ENCODE measurements at regions of chr20 and their contacts with region 1.

Region 1: DNA sequence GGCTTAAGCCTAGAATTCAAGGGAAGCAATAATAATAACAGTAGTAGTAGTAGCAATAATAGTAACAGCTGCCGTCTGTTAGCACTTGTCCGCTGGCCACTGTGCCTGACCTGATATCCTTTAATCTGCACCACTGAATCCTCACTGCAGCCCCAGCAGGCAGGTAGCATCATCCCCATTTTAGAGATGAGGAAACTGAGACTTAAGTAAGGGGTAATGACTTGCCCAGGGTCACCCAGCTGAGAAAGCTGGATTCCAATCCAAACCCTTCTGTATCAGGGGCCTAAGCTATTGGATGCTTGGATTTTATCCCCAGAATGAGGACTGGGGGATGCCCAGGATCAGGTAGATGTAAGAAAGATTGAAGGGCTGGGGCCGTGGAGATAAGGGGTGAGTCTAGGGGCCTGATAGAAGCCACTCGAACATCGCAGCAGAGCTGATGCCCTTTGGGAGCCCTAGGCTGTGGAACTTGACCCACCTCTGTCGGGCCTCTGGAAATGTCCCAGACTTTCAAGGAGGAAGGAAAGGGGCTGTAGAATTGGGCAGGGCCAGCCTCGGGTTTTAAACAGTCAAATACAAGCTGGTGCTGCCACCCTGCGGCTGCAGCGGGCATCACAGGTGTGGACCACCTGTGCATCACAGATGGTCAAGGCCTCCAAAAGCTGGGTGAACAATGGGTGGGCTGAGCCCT is 102.1 kb upstream of the MYL9 start:
- DNase-seq: peak; percentile 76
- H3K4me3 Mint-ChIP-seq: no peak overlapping the region
- H3K27ac Mint-ChIP-seq: no peak overlapping the region
- H3K4me1 Mint-ChIP-seq: peaks cover 2% of the 10 kb centered on the region
- H3K27me3 Mint-ChIP-seq: no peaks in the 10 kb centered on the region

Region 2: DNA sequence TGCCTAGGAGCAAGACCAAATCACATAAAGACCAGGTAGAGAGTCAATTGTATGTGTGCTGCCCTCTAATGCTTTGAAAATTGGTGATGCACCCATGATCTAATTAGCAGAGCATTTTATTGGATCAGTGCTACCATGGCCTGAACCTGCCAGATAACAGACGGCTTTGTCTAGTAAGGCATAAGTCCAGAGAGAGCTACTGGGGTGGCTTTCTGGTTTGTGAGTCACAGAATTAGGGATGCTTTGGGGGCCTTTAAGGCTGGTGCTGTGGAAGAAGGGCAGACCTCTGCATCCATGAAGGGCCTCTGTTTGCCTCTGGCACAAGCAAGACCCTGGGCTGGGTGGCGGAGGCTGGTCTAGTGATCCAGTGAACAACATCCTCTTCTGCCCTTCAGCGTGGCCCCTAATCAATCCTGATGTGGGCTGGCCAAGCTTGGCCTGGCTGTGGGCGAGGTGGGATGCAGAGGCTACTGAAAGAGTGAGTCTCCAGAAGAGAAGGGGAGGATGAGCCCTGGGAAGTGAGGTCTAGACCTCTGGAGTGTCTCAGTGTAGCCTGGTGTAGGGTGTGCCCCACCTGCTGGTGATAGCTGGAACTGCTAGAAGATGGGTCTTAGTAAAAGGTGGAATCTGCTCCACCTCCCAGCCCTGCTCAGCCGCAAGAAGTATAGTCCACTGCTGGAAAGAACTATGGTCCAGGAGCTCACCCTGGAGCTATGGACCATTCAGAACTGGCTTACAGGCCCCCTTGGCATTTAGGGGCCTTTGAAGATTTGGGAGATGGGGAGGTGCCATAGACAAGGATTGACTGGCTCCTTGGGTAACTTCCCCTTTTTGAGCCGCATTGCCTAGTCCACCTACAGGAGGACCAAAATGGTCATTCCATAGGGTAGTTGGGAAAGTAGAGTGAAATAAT is 239.6 kb before region 1 on chr20:
- CTCF ChIA-PET with region 1: interaction called, 79 read pairs
- intact Hi-C with region 1: loop called (anchors 1 kb)
- DNase-seq: peak; percentile 89
- H3K4me3 Mint-ChIP-seq: no peak overlapping the region
- H3K27ac Mint-ChIP-seq: no peak overlapping the region
- H3K4me1 Mint-ChIP-seq: peaks cover 4% of the 10 kb centered on the region
- H3K27me3 Mint-ChIP-seq: no peaks in the 10 kb centered on the region

Region 3: GRCh38 chr20:36273414-36274180 is 165.6 kb before region 1 on chr20:
- CTCF ChIA-PET with region 1: interaction called, 17 read pairs
- intact Hi-C with region 1: loop called (anchors 1 kb)
- DNase-seq: peak; percentile 34
- H3K4me3 Mint-ChIP-seq: no peak overlapping the region
- H3K27ac Mint-ChIP-seq: no peak overlapping the region
- H3K4me1 Mint-ChIP-seq: no peaks in the 10 kb centered on the region
- H3K27me3 Mint-ChIP-seq: no peaks in the 10 kb centered on the region

Region 4: GRCh38 chr20:36408219-36408618 is 31.0 kb before region 1 on chr20:
- CTCF ChIA-PET with region 1: no interaction called
- intact Hi-C with region 1: no loop called
- DNase-seq: no peak
- H3K4me3 Mint-ChIP-seq: no peak overlapping the region
- H3K27ac Mint-ChIP-seq: no peak overlapping the region
- H3K4me1 Mint-ChIP-seq: no peaks in the 10 kb centered on the region
- H3K27me3 Mint-ChIP-seq: peaks cover 6% of the 10 kb centered on the region

Region 5: DNA sequence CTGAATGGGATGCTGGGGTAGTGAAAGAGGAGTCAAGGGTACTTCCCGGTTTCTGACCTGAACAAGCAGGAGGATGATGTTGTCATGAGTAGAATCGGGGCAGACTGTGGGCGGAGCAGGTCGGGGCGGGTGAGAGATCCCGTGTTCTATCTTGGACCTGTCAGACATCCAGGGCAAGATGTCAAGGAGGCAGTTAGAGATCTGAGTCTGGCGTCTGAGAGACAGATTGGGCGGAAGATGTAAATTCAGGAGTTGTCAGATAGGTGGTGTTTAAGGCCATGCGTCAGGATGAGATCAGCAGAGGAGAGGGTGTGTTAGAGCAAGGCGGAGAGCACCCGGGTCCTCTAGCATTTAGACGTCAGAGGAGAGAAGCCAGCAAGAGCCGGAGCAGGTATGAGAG is 17.5 kb before region 1 on chr20:
- CTCF ChIA-PET with region 1: interaction called, 17 read pairs
- intact Hi-C with region 1: no loop called
- DNase-seq: no peak
- H3K4me3 Mint-ChIP-seq: no peak overlapping the region
- H3K27ac Mint-ChIP-seq: no peak overlapping the region
- H3K4me1 Mint-ChIP-seq: no peaks in the 10 kb centered on the region
- H3K27me3 Mint-ChIP-seq: peaks cover 4% of the 10 kb centered on the region

Region 6: DNA sequence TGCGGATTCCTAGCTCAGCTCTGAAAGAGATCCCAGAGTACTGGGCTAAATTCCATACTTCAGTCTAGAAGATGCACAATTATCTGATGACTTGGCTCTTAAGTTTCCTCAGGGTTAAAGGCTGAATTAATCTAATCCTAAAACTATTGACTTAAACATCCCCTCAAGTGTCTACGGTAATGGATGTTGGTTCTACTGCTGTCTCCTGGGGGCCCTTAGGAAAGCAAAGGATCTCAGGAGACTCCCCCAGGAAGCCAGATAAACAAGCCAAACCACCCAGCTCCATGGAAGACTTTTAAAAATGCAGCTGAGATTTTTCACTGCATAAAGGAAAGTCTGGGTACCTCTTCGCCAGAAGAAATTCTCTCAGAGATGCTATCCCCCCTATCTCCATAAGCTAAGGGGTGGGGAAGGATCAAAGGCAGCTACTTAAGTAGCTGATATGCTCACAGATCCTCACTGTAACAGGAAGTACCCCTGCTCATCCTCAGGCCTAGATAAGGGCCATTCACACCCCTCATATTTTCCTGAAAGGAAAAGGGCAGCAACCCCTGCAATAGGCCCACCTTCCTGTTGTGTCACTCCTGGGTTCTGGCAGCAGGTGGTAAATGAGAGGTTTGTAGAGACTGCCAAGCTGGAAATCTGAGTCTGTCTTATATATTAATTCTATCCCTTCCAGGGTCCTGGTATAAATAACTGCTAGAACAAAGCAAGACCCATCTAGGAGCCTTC is 297.4 kb after region 1 on chr20:
- CTCF ChIA-PET with region 1: no interaction called
- intact Hi-C with region 1: no loop called
- DNase-seq: no peak
- H3K4me3 Mint-ChIP-seq: no peak overlapping the region
- H3K27ac Mint-ChIP-seq: no peak overlapping the region
- H3K4me1 Mint-ChIP-seq: peaks cover 30% of the 10 kb centered on the region
- H3K27me3 Mint-ChIP-seq: no peaks in the 10 kb centered on the region

Region 7: GRCh38 chr20:36754656-36755222 is 315.6 kb after region 1 on chr20:
- CTCF ChIA-PET with region 1: no interaction called
- intact Hi-C with region 1: no loop called
- DNase-seq: peak; percentile 52
- H3K4me3 Mint-ChIP-seq: no peak overlapping the region
- H3K27ac Mint-ChIP-seq: no peak overlapping the region
- H3K4me1 Mint-ChIP-seq: peaks cover 6% of the 10 kb centered on the region
- H3K27me3 Mint-ChIP-seq: no peaks in the 10 kb centered on the region

Measured in activated naive CD4-positive, alpha-beta T cell treated with anti-CD3 and anti-CD28 coated beads for 36 hours (primary cell).